ENCODE measurements at regions of chr20 and their contacts with region 1.

Region 1: GRCh38 chr20:2688041-2688591 is 4.5 kb upstream of the EBF4 start:
- DNase-seq: peak; percentile 89
- ATAC-seq: peak; percentile 67
- H3K4me3 Mint-ChIP-seq: peak overlapping the region; percentile 46
- H3K27ac Mint-ChIP-seq: peak overlapping the region; percentile 62
- H3K4me1 Mint-ChIP-seq: peaks cover 35% of the 10 kb centered on the region
- H3K27me3 Mint-ChIP-seq: peaks cover 36% of the 10 kb centered on the region

Region 2: GRCh38 chr20:2713285-2713684 is 25.2 kb after region 1 on chr20:
- CTCF ChIA-PET with region 1: interaction called, 12 read pairs
- POLR2A ChIA-PET with region 1: interaction called, 4 read pairs
- DNase-seq: no peak
- ATAC-seq: peak; percentile 60
- H3K4me3 Mint-ChIP-seq: no peak overlapping the region
- H3K27ac Mint-ChIP-seq: no peak overlapping the region
- H3K4me1 Mint-ChIP-seq: no peaks in the 10 kb centered on the region
- H3K27me3 Mint-ChIP-seq: peaks cover 6% of the 10 kb centered on the region

Region 3: GRCh38 chr20:2729251-2729713 is 41.2 kb after region 1 on chr20:
- CTCF ChIA-PET with region 1: interaction called, 10 read pairs
- POLR2A ChIA-PET with region 1: no interaction called
- DNase-seq: peak; percentile 51
- ATAC-seq: peak; percentile 90
- H3K4me3 Mint-ChIP-seq: peak overlapping the region; percentile 6
- H3K27ac Mint-ChIP-seq: peak overlapping the region; percentile 77
- H3K4me1 Mint-ChIP-seq: peaks cover 11% of the 10 kb centered on the region
- H3K27me3 Mint-ChIP-seq: peaks cover 17% of the 10 kb centered on the region

Region 4: DNA sequence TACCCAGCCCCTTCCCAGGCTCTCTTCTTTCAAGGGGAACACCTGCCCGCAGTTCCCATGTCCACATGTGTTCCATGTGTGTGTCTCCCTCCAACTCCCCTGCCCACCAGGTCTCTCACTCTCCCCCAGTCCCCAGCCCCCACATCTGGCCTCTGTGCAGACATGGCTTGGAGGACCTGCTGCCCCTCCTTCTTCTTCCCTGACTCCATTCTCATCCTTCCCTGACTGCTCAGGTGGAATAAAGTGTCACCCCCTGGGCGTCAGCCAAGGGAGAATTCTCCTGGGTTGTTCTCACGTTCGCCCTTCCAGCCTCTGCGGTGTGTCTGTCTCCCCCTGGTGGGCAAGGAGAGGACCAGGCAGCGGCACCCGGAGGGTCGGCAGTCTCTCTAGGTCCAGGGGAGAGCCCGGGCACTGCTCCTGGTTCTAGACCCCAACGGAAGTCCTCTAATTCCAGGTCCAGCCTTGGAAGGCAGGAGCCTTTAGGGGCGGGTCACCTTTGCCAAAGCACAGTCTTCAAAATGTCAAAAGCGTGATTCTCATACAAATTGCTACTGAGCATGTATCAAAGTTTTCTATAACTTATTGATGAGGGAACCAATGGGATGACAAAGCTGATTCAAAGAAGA is 54.9 kb after region 1 on chr20:
- CTCF ChIA-PET with region 1: interaction called, 140 read pairs
- POLR2A ChIA-PET with region 1: interaction called, 5 read pairs
- DNase-seq: peak; percentile 80
- ATAC-seq: peak; percentile 70
- H3K4me3 Mint-ChIP-seq: no peak overlapping the region
- H3K27ac Mint-ChIP-seq: peak overlapping the region; percentile 62
- H3K4me1 Mint-ChIP-seq: peaks cover 32% of the 10 kb centered on the region
- H3K27me3 Mint-ChIP-seq: peaks cover 18% of the 10 kb centered on the region

Region 5: DNA sequence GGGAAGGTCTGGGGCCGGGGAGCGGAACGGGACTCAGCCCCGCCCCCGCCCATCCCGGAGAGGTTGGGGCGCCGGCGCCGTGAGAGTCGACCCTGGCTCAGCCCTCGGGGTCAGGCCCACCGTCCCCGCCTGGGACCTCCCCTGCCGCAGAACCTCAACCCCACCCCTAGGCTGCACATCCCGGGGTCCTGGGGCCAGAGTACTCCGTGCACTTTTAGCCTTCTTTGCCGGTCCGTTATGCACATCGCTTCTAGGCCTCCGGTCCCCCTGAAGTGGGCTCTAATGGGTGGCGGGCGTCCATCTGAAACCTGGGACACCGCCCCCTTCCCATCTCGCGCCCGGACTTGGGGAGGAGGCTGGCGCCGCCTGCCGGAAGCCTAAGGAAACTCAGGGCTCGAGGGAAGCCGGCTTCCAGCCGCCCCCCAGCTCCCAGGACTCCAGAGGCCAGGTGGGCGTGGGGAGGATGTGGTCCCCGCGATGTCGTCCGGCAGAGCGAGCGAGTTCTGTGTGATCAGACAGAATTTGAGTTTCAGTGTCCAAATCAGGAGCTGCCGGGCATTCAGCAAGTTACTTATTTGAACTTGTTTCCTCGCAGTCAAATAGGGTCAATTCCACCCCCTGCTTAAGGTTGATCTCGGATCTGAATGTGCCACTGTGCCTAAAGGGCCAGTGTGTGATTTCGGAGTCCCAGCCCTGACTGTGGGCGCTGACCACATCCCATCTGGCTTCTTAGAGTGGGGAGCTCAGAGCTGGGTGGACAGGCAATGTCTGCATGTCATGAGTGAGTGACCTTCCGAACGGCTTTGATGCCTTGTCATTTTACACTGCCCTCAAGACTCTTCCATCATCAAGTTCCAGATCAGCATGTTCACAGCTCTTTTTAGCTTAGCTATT is 64.7 kb after region 1 on chr20:
- CTCF ChIA-PET with region 1: interaction called, 37 read pairs
- POLR2A ChIA-PET with region 1: interaction called, 6 read pairs
- DNase-seq: peak; percentile 47
- ATAC-seq: peak; percentile 21
- H3K4me3 Mint-ChIP-seq: peak overlapping the region; percentile 70
- H3K27ac Mint-ChIP-seq: no peak overlapping the region
- H3K4me1 Mint-ChIP-seq: peaks cover 21% of the 10 kb centered on the region
- H3K27me3 Mint-ChIP-seq: peaks cover 56% of the 10 kb centered on the region

Measured in activated CD8-positive, alpha-beta T cell treated with anti-CD3 and anti-CD28 coated beads, Interleukin-2, amount 10 ng/mL, durations not matched to agents 7 days and 5 days (primary cell).